Activated CD4-positive, alpha-beta memory T cell treated with anti-CD3 and anti-CD28 coated beads for 36 hours (primary cell): ENCODE measurements at regions of chr16 and their contacts with region 1.

Region 1: GRCh38 chr16:2155091-2156021 is at the start of gene TRAF7:
- DNase-seq: peak; percentile 98
- H3K4me3 Mint-ChIP-seq: peak within 1 kb of the TSS; percentile 93
- H3K27ac Mint-ChIP-seq: peak within 1 kb of the TSS; percentile 87
- H3K4me1 Mint-ChIP-seq: peaks cover 42% of the 10 kb centered on the region
- H3K27me3 Mint-ChIP-seq: no peaks in the 10 kb centered on the region
- total RNA-seq, gene TRAF7: 77.1 to 80.3 TPM

Region 2: GRCh38 chr16:1959269-1960049 is 195.9 kb before region 1 on chr16 and contains the start of gene NDUFB10:
- CTCF ChIA-PET with region 1: no interaction called
- POLR2A ChIA-PET with region 1: interaction called, 11 read pairs
- intact Hi-C with region 1: no loop called
- DNase-seq: peak; percentile 95
- H3K4me3 Mint-ChIP-seq: peak within 1 kb of the TSS; percentile 96
- H3K27ac Mint-ChIP-seq: peak within 1 kb of the TSS; percentile 86
- H3K4me1 Mint-ChIP-seq: peaks cover 40% of the 10 kb centered on the region
- H3K27me3 Mint-ChIP-seq: peaks cover 1% of the 10 kb centered on the region
- total RNA-seq, gene NDUFB10: 122 to 125 TPM

Region 3: DNA sequence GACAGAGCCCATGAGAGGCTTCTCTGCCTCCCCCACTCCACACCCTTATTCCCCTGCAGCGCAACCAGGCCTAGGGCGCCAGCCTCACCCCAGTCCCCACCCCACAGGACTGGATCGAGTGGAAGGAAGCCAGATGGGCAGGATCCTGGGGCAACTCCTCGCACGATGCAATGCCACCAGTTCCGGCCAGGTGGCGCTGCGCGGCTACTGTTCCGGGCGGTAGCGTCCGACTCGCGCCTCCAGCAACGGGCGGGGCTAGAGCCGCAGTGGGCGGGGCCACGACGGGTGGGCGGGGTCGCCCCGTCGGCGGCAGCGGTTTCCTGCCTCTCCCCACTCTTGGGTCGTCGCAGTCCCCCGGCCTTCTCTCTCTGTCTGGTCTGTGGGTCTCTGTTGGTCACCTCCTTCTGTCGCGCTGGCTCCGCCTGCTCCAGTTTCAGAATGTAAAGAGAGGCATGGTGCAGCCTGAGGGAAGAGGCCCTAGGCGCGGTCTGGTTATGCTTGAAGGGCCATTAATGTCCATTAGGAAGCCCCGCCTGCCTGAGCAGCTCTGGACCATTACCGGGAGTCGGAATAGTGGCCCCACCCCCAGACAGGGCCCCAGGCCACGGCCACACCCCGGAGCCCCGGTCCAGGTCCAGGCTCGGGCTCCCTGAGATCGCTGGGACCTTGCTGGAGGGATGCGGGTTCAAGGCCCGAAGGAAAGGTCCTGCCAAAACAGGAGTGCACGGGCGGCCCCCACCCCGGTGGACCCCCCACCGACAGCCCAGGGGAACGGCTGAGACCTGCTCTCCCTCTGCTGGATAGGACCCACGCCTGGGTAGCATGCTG is 132.0 kb before region 1 on chr16:
- CTCF ChIA-PET with region 1: interaction called, 8 read pairs
- POLR2A ChIA-PET with region 1: interaction called, 3 read pairs
- intact Hi-C with region 1: loop called (anchors 1 kb)
- DNase-seq: peak; percentile 96
- H3K4me3 Mint-ChIP-seq: peak overlapping the region; percentile 58
- H3K27ac Mint-ChIP-seq: no peak overlapping the region
- H3K4me1 Mint-ChIP-seq: peaks cover 17% of the 10 kb centered on the region
- H3K27me3 Mint-ChIP-seq: peaks cover 34% of the 10 kb centered on the region

Region 4: GRCh38 chr16:2142942-2143877 is 12.1 kb before region 1 on chr16:
- CTCF ChIA-PET with region 1: interaction called, 24 read pairs
- POLR2A ChIA-PET with region 1: interaction called, 26 read pairs
- intact Hi-C with region 1: no loop called
- DNase-seq: peak; percentile 29
- H3K4me3 Mint-ChIP-seq: no peak overlapping the region
- H3K27ac Mint-ChIP-seq: no peak overlapping the region
- H3K4me1 Mint-ChIP-seq: peaks cover 2% of the 10 kb centered on the region
- H3K27me3 Mint-ChIP-seq: no peaks in the 10 kb centered on the region

Region 5: DNA sequence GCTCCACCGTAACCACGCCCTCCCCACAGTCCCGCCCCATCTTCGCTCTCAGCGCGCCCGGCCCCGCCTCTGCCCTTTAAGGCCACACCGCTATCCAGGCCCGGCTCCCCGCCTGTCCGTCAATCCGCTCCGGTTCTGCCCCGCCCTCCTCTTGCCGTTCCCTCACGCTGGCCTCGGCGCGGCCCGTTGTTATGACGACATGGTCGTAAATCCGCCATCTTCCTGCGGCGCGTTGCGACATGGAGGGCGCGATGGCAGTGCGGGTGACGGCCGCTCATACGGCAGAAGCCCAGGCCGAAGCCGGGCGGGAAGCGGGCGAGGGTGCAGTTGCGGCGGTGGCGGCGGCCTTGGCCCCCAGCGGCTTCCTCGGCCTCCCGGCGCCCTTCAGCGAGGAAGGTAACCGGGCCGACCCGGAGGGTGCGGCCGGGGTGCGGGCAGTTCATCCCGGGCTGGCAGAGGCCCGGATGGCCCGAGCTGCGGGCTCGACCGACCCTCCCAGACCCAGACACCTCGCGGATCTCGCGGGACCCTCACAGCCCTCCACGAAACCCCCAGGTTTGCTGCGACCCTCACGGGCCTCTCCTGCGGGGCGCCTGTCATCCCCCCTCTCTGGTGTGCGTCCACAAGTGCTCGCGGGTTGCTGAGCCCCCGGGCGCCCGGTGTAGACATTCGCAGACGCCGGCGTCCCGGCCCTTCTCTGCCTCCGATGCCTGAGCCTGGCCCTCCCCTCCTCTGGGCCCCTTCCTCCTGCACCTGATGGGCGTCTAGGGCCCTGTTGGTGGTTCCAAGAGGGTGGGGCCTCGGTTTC is 68.2 kb after region 1 on chr16 and contains the start of gene E4F1:
- CTCF ChIA-PET with region 1: no interaction called
- POLR2A ChIA-PET with region 1: interaction called, 4 read pairs
- intact Hi-C with region 1: loop called (anchors 1 kb)
- DNase-seq: peak; percentile 100
- H3K4me3 Mint-ChIP-seq: peak within 1 kb of the TSS; percentile 81
- H3K27ac Mint-ChIP-seq: peak within 1 kb of the TSS; percentile 45
- H3K4me1 Mint-ChIP-seq: peaks cover 16% of the 10 kb centered on the region
- H3K27me3 Mint-ChIP-seq: no peaks in the 10 kb centered on the region
- total RNA-seq, gene E4F1: 19.3 to 19.6 TPM

Region 6: DNA sequence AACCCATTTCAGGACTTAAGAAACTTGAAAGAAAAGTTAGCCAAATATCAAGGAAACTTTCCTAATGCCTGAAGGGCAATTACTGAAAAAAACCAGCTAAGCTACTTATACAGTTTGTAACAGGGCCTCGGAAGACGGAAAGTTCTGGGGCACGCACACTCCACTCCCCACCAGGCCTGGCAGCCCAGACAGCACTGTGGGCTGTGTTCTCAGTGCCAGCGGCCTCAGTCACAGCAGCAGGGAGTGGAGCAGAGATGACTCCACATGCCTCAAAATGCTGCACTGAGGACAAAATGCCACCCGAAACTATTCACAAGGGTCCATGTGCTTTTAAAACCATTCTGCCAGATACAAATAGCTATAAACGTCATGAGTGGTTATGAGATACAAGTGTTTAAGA is 102.4 kb after region 1 on chr16:
- CTCF ChIA-PET with region 1: no interaction called
- POLR2A ChIA-PET with region 1: no interaction called
- intact Hi-C with region 1: no loop called
- DNase-seq: no peak
- H3K4me3 Mint-ChIP-seq: no peak overlapping the region
- H3K27ac Mint-ChIP-seq: no peak overlapping the region
- H3K4me1 Mint-ChIP-seq: no peaks in the 10 kb centered on the region
- H3K27me3 Mint-ChIP-seq: no peaks in the 10 kb centered on the region

Region 7: GRCh38 chr16:2603165-2604015 is 448.0 kb after region 1 on chr16:
- CTCF ChIA-PET with region 1: no interaction called
- POLR2A ChIA-PET with region 1: no interaction called
- intact Hi-C with region 1: no loop called
- DNase-seq: peak; percentile 92
- H3K4me3 Mint-ChIP-seq: peak overlapping the region; percentile 97
- H3K27ac Mint-ChIP-seq: peak overlapping the region; percentile 92
- H3K4me1 Mint-ChIP-seq: peaks cover 21% of the 10 kb centered on the region
- H3K27me3 Mint-ChIP-seq: no peaks in the 10 kb centered on the region